ENCODE measurements at regions of chr2 and their contacts with region 1.

Region 1: GRCh38 chr2:241508240-241509154 is at the start of gene STK25:
- DNase-seq: peak; percentile 97 to 98
- ATAC-seq: peak; percentile 51 to 59
- H3K4me3 ChIP-seq: peak within 1 kb of the TSS; percentile 72 to 85 (median 78)
- H3K27ac ChIP-seq: peak within 1 kb of the TSS; percentile 93 to 98 (median 96)
- H3K4me1 ChIP-seq: peaks cover 45 to 53% of the 10 kb centered on the region in 2 donors
- H3K27me3 ChIP-seq: no peaks in the 10 kb centered on the region
- CTCF ChIP-seq: no peak
- POLR2A ChIP-seq: peak; percentile 82 to 84
- total RNA-seq, gene STK25: 407 to 555 (median 524) TPM

Region 2: GRCh38 chr2:241161646-241162281 is 346.7 kb before region 1 on chr2:
- in situ Hi-C with region 1: no loop called
- intact Hi-C with region 1: loop called (anchors 5 kb)
- DNase-seq: peak; percentile 95 to 99
- ATAC-seq: peak; percentile 93 to 94
- H3K4me3 ChIP-seq: no peak overlapping the region
- H3K27ac ChIP-seq: peak overlapping the region; percentile 82 to 92 (median 91)
- H3K4me1 ChIP-seq: peaks cover 21 to 22% of the 10 kb centered on the region in 2 donors
- H3K27me3 ChIP-seq: no peaks in the 10 kb centered on the region
- CTCF ChIP-seq: peak in 1 of 5 experiments; percentile 35
- POLR2A ChIP-seq: peak in 1 of 2 donors; percentile 23

Region 3: DNA sequence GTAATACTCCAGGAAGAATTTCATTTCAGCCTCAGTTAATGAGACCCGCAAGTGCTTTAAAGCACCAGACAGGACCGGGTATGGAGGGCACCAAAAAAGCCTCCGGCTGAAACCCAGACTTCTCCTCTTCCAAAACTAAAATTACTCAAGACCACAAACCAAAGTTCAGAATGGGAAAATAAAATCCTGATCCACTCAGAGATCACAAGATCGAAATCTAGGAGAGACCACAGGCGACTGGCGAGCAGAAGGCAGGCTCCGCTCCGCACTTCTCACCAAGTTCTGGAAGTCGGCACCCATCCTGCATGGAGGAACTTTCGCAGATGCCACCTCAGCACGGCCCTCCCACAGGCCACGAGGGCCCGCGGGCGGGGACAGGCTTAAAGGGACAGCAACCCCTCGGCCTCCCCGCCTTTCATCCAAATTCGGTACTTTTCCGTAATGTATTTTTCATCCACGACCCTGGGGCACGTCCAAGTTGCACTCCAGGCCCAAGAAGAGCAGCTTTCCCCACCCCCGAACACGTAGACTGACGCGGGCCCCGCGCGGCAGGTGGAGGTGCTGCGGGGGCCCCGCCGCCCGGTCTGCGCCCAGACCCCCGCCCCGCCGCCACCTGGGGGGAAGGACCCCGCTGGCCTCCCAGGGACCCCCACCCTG is 236.7 kb before region 1 on chr2:
- in situ Hi-C with region 1: no loop called
- intact Hi-C with region 1: loop called (anchors 5 kb)
- DNase-seq: peak; percentile 80 to 81
- ATAC-seq: peak; percentile 88 to 90
- H3K4me3 ChIP-seq: peak overlapping the region; percentile 67 to 93 (median 73)
- H3K27ac ChIP-seq: peak overlapping the region; percentile 83 to 97 (median 92)
- H3K4me1 ChIP-seq: peaks cover 42 to 43% of the 10 kb centered on the region in 2 donors
- H3K27me3 ChIP-seq: no peaks in the 10 kb centered on the region
- CTCF ChIP-seq: no peak
- POLR2A ChIP-seq: peak in 1 of 2 donors; percentile 46

Region 4: DNA sequence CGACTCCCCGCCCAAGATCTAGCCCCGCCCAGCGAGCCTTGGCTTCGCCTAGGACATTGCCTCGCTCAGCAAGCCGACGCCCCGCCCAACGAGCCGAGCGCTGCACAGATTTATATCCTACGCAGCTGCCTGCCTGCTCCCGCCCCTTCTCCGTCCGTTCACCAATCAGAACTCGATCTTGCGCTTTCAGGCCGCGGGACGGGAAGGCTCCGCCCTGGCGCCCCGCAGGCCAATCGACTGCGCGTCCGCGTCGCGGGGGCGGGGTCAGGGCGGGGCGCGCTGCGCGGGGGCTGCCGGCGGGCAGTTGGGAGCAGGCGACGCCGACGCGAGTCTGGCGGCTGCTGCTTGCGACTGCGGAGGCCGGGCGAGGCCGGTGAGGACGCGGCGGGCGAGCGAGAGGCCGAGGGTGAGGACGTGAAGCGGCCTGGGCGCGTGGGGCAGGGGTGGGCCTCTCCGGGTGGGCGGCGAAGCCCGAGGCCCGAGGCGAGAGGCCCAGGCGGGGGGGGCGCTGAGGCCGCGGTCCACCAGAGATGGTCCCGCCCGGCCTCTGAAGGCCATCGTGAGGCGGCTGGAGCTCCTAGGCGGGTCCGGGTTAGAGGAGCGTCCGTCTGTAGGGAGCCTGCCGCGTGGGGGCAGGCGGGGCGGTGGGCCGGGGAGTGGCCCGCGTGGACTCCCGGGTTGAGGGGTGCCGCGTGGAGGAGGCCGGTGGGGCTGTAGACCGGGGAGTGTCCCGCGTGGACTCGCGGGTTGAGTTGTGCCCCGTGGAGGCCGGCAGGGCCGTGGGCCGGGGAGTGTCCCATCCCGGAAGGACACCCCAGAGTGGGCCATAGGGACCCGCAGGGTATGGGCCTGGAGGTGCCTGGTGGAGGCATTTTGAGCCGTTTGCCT is 152.3 kb before region 1 on chr2 and contains the start of gene FARP2:
- in situ Hi-C with region 1: no loop called
- intact Hi-C with region 1: loop called (anchors 2 kb)
- DNase-seq: peak; percentile 99
- ATAC-seq: peak; percentile 92 to 96
- H3K4me3 ChIP-seq: peak within 1 kb of the TSS; percentile 70 to 85 (median 82)
- H3K27ac ChIP-seq: peak within 1 kb of the TSS; percentile 80 to 95 (median 92)
- H3K4me1 ChIP-seq: peaks cover 23 to 30% of the 10 kb centered on the region in 2 donors
- H3K27me3 ChIP-seq: no peaks in the 10 kb centered on the region
- CTCF ChIP-seq: no peak
- POLR2A ChIP-seq: peak; percentile 87 to 88
- total RNA-seq, gene FARP2: 10.7 to 20.1 (median 13.6) TPM

Region 5: GRCh38 chr2:241540771-241541561 is 32.5 kb after region 1 on chr2:
- in situ Hi-C with region 1: no loop called
- intact Hi-C with region 1: loop called (anchors 2 kb)
- DNase-seq: peak; percentile 60 to 81
- ATAC-seq: peak; percentile 81 to 91
- H3K4me3 ChIP-seq: peak overlapping the region; percentile 53 to 81 (median 64)
- H3K27ac ChIP-seq: peak overlapping the region in 3 of 4 donors; percentile 55 to 78 (median 57)
- H3K4me1 ChIP-seq: peaks cover 13 to 19% of the 10 kb centered on the region in 2 donors
- H3K27me3 ChIP-seq: peaks cover 3 to 19% (median 7%) of the 10 kb centered on the region in 3 donors
- CTCF ChIP-seq: no peak
- POLR2A ChIP-seq: no peak

Region 6: GRCh38 chr2:241637000-241637791 is 128.7 kb after region 1 on chr2 and contains the starts of genes ATG4B and THAP4:
- in situ Hi-C with region 1: no loop called
- intact Hi-C with region 1: loop called (anchors 2 kb)
- DNase-seq: peak; percentile 70 to 81
- ATAC-seq: peak; percentile 90 to 91
- H3K4me3 ChIP-seq: peak within 1 kb of the TSS; percentile 73 to 95 (median 92)
- H3K27ac ChIP-seq: peak within 1 kb of the TSS; percentile 92 to 100 (median 98)
- H3K4me1 ChIP-seq: peaks cover 36 to 49% of the 10 kb centered on the region in 2 donors
- H3K27me3 ChIP-seq: no peaks in the 10 kb centered on the region
- CTCF ChIP-seq: peak in 1 of 5 experiments; percentile 51
- POLR2A ChIP-seq: peak; percentile 65 to 74
- total RNA-seq, gene ATG4B: 32.0 to 57.5 (median 49.8) TPM
- total RNA-seq, gene THAP4: 71.3 to 83.3 (median 79.9) TPM

Measured in gastrocnemius medialis (tissue), 4 donors.